ENCODE measurements at regions of chr15 and their contacts with region 1.

Region 1: GRCh38 chr15:85330901-85331588 is 49.4 kb upstream of the AKAP13 start:
- DNase-seq: peak; percentile 73
- CTCF ChIP-seq: peak; percentile 94

Region 2: GRCh38 chr15:84734794-84735479 is 596.1 kb before region 1 on chr15:
- in situ Hi-C with region 1: no loop called
- DNase-seq: peak; percentile 64
- CTCF ChIP-seq: no peak

Region 3: DNA sequence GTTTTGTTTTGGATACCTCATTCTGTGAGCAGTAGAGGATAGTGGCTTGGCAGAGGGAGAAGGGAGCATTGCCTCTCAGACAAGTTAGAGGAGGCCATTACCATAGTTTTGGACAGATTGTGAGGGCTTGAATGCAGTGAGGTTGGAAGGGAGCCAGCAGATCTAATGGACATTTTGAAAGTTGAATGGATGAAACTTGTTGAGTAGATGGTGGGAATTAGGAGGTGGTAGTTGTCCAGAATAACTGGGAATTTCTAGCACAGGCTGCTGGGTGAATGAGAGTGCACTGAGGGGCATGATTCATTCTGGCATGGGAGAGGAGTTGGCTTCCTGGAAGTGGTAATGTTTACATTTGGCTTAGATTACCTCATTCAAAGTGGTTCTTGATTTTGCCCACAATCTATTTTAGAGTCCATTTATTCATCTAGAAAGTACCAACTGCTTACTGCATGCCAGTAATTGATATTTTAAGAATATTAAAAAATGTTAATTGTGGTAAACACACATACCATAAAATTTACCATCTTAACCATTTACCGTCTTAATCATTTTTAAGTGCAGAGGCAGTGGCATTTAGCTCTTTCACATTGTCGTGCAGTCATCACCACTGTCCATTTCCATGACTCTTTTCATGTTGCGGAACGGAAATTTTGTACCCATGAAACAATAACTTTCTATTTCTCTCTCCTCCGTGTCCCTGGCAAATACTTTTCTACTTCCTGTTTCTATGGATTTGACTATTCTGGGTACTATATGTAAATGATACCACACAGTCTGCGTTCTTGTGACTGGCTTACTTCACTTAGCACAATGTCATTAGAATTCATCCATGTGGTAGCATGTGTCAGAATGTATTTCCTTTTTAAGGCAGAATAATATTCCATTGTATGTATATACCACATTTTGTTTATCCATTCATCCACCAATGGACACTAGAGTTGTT is 77.0 kb after region 1 on chr15:
- in situ Hi-C with region 1: loop called (anchors 10 kb)
- DNase-seq: no peak
- CTCF ChIP-seq: no peak

Region 4: GRCh38 chr15:86425746-86426145 is 1094.7 kb after region 1 on chr15:
- in situ Hi-C with region 1: no loop called
- DNase-seq: no peak
- CTCF ChIP-seq: no peak